Activated CD4-positive, alpha-beta T cell treated with anti-CD3 and anti-CD28 coated beads for 36 hours (primary cell): ENCODE measurements at regions of chr1 and their contacts with region 1.

Region 1: DNA sequence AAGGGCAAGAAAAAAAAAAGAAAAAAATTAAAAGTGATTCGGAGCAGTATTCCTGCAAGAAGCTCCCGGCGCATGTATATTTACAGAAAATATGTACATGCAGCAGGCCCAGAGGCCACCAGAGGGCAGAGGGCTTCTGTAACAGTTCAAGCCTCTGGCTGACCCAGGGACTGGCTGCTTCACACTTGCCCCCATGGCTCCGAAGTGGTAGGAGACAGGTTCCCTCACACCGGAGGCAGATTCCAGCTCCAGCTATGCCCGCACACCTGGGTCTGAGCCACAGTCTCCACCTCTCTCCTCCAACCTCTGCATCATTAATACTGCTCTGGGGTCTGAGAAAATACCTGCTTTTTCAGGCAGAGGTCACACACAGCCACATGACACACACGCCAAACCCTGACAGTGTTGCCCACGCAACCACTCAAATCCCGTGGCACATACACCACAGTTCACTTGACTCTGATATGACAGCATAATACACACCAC is 2.2 kb upstream of the ARHGAP30 start:
- DNase-seq: peak; percentile 75
- ATAC-seq: no peak
- H3K4me3 Mint-ChIP-seq: no peak overlapping the region
- H3K27ac Mint-ChIP-seq: peak overlapping the region; percentile 19
- H3K4me1 Mint-ChIP-seq: peaks cover 35% of the 10 kb centered on the region
- H3K27me3 Mint-ChIP-seq: no peaks in the 10 kb centered on the region

Region 2: DNA sequence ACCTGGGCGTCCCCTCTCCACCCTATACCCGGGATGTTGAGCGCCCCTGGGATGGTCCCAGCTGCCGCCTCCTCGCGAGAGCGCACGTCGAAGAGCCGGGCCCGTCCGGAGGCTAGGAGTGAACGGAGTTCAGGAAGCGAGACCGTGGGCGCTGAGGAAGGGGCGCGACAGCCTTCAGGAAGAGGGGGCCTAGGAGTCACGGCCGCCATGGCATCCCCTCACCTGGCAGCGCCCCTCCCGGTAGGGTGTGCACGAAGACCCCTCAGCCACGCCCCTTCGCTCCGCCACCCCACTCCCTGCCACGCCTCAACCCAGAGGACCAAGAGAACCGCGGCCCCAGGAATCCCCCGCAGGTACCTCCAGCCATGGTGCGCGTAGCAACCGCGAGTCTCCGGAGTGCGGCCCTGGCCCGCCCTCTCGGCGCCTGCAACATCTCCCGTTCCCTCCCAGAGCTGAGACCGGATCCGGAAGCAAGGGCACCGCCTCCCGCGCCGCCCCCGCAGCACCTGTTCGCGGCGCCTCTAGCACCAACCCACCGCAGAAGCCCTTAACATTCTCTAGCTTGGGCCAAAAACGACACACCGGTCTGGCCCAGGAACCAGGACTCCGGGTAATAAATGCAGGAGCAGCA is 33.3 kb before region 1 on chr1 and contains the start of gene TSTD1:
- CTCF ChIA-PET with region 1: interaction called, 14 read pairs
- POLR2A ChIA-PET with region 1: interaction called, 3 read pairs
- intact Hi-C with region 1: loop called in 1 of 2 experiments (anchors 5 kb)
- DNase-seq: peak; percentile 95
- ATAC-seq: peak; percentile 90
- H3K4me3 Mint-ChIP-seq: peak within 1 kb of the TSS; percentile 86
- H3K27ac Mint-ChIP-seq: peak within 1 kb of the TSS; percentile 91
- H3K4me1 Mint-ChIP-seq: peaks cover 34% of the 10 kb centered on the region
- H3K27me3 Mint-ChIP-seq: no peaks in the 10 kb centered on the region
- total RNA-seq, gene TSTD1: 26.0 to 42.8 TPM

Region 3: DNA sequence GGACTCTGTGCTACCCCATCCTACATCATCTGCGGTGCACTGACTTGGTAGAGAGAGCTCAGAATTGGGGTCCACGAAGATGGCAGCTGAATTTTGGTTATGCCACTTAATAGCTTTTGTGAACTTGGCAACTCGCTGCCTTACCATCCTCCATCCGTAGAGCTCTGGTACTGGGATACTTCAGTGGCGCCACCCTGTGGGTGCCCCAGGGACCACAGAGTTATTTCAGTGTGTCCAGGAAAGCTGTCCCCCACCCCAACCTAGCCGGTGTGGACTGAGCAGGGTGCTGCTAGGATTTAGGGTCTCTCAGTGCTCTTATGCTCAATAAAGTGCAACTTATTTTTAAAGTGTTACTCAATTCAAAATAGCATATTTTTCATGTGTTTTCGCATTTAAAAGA is 17.1 kb before region 1 on chr1:
- CTCF ChIA-PET with region 1: interaction called, 12 read pairs
- POLR2A ChIA-PET with region 1: interaction called, 3 read pairs
- intact Hi-C with region 1: no loop called
- DNase-seq: peak; percentile 42
- ATAC-seq: peak; percentile 57
- H3K4me3 Mint-ChIP-seq: no peak overlapping the region
- H3K27ac Mint-ChIP-seq: no peak overlapping the region
- H3K4me1 Mint-ChIP-seq: peaks cover 20% of the 10 kb centered on the region
- H3K27me3 Mint-ChIP-seq: no peaks in the 10 kb centered on the region

Region 4: DNA sequence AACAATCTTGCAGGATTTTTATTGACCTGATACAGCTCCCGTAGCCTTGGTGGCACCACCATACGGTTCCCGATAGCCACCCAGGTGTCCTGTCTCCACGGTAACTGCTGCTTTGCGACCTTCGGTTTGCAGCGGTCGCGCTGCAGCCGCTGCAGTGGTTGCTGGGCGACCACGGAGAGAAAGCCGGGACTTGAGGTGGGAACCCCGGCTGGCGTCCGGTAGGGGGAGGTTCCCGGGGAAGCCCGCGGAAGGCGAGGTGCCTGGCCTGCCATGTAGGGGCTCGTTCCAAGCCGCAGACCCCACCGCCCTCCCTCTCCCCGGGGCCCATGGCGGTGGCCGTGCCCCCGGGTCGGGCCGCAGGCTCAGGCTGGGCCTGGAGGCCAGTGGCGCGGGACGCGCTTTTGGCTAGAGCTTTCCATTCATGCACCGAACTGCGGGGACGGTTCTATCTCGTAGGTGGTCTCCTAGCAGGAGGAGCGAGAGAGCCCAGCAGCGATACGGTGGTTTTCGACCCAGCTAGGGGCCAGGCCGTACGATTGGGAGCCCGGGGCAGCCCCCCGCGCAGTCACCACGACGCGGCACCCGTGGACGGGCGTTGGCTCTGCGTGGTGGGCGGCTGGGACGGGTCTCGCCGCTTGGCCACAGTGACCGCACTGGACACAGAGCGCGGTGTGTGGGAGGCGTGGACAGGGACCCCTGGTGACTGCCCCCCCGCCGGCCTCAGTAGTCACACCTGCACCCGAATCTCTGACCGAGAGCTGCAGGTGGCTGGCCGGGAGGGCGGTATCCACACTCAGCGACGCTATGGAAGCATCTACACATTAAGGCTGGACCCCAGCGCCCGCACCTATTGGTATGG is 26.5 kb after region 1 on chr1 and contains the start of gene KLHDC9:
- CTCF ChIA-PET with region 1: interaction called, 126 read pairs
- POLR2A ChIA-PET with region 1: interaction called, 4 read pairs
- intact Hi-C with region 1: loop called (anchors 1 kb)
- DNase-seq: peak; percentile 84
- ATAC-seq: peak; percentile 82
- H3K4me3 Mint-ChIP-seq: peak within 1 kb of the TSS; percentile 71
- H3K27ac Mint-ChIP-seq: peak within 1 kb of the TSS; percentile 73
- H3K4me1 Mint-ChIP-seq: peaks cover 34% of the 10 kb centered on the region
- H3K27me3 Mint-ChIP-seq: no peaks in the 10 kb centered on the region
- total RNA-seq, gene KLHDC9: 0.39 to 0.50 TPM

Region 5: GRCh38 chr1:161139765-161140164 is 67.8 kb after region 1 on chr1:
- CTCF ChIA-PET with region 1: interaction called, 11 read pairs
- POLR2A ChIA-PET with region 1: no interaction called
- intact Hi-C with region 1: loop called in 1 of 2 experiments (anchors 1 kb)
- DNase-seq: peak; percentile 61
- ATAC-seq: peak; percentile 53
- H3K4me3 Mint-ChIP-seq: no peak overlapping the region
- H3K27ac Mint-ChIP-seq: no peak overlapping the region
- H3K4me1 Mint-ChIP-seq: peaks cover 3% of the 10 kb centered on the region
- H3K27me3 Mint-ChIP-seq: no peaks in the 10 kb centered on the region

Region 6: GRCh38 chr1:161159087-161159912 is 87.4 kb after region 1 on chr1 and contains the start of gene USP21:
- CTCF ChIA-PET with region 1: interaction called, 6 read pairs
- POLR2A ChIA-PET with region 1: no interaction called
- intact Hi-C with region 1: loop called (anchors 2 to 5 kb)
- DNase-seq: peak; percentile 95
- ATAC-seq: peak; percentile 96
- H3K4me3 Mint-ChIP-seq: peak within 1 kb of the TSS; percentile 79
- H3K27ac Mint-ChIP-seq: peak within 1 kb of the TSS; percentile 82
- H3K4me1 Mint-ChIP-seq: peaks cover 50% of the 10 kb centered on the region
- H3K27me3 Mint-ChIP-seq: no peaks in the 10 kb centered on the region
- total RNA-seq, gene USP21: 25.1 to 32.0 TPM

Region 7: DNA sequence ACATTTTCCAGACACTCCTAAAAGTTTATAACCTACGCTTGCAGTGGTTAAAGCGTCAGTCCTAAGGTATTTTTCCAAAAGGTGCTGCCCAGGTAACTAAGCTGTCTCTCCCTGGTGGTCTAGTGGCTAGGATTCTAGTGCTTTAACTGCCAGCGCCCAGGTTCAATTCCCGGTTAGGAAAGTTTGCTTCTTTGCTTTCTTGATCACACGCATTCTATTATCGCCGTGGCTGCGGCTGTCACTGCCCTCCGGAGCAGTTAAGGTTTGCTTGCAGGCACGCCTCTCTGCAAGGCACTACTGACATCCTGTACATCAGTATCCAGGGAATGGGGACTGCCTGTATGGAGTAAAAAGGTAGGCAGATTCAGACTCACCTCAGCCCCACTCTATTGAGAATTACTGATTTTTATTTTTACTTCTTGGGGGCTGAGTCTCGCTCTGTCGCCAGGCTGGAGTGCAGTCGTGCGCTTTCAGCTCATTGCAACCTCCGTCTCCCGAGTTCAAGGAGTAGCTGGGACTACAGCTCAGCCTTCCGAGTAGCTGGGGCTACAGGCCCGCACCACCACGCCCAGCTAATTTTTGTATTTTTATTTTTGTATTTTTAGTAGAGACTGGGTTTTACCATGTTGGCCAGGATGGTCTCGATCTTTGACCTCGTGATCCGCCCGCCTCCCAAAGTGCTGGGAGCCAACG is 349.0 kb after region 1 on chr1:
- CTCF ChIA-PET with region 1: no interaction called
- POLR2A ChIA-PET with region 1: no interaction called
- intact Hi-C with region 1: no loop called
- DNase-seq: peak; percentile 17
- ATAC-seq: no peak
- H3K4me3 Mint-ChIP-seq: peak overlapping the region; percentile 73
- H3K27ac Mint-ChIP-seq: no peak overlapping the region
- H3K4me1 Mint-ChIP-seq: peaks cover 6% of the 10 kb centered on the region
- H3K27me3 Mint-ChIP-seq: peaks cover 7% of the 10 kb centered on the region